Cardiac septum (tissue), 1 donor: ENCODE measurements at regions of chr19 and their contacts with region 1.

Region 1: DNA sequence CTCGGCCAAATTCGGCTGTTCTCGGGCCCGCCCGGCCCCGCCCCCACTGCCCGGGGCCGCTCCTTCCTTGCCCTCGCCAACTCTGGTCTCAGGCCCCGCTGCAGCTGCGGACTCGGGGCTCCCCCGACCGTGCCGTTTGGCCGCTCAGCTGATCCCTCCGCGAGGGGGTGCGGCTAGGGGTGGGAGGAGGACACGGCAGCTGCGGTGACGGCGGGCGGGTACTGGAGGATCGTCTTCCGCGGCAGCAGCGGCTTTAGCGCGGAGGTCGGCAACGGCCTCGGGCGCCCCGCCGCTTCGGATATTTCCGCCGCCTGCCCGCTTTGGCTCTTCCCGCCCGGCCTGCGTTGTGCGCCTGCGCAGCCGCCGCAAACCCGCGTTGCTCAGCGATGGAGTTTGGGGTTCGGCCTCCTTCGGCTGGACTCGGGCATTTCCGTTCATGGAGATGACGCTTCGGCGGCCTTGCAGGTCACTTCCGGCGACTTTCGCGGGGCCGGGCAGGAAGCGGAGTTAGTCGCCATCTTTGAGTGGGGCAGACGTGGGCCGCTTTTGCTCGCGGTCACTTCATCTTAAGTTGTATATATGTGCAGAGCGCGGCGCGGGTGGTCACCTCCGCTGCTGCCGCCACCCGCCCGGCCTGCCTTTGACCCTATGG is 338 bp upstream of the UBE2M start:
- DNase-seq: peak; percentile 100

Region 2: GRCh38 chr19:58519355-58520256 is 39.1 kb before region 1 on chr19 and contains the start of gene ZBTB45:
- intact Hi-C with region 1: loop called (anchors 2 kb)
- DNase-seq: peak; percentile 94
- total RNA-seq, gene ZBTB45: 13.8 TPM

Region 3: DNA sequence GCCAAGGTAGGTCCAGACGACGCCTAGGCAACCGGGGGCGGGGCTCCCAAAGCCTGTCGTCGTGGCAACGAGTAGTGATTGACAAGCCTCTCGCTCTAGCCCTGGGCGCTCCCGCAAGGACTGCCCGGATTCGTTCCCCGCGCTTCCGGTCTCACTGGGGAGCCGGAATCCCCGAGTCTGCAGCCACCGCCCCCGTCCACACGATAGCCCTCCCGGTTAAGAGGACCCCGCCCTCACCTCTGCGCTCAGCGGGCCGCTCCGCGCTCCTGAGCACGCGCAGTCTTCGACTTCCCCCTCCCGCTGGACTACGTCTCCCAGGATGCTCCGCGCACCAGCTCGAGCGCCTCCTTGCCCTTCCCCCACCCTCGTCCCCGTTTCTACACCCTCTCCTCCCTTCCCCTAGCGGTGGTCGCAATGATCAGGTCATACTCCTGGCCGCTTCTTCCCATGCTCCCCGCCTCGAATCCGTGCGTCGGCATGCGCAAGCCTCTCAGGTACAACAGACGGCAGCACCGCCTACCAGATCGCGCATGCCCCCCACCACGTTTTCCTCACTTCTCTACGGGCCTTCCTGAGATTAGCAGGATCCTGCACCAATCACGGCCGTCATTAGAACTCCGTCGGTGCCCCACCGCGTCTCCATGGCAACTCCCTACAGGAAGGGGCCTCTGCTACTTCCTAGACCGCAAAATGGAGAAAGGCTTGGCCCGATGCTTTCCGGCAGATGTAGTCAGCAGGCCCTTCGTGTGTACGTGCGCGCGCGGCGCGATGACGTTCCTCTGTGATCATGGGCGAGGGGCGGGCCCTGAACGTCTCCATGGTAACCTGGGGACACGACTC is 14.3 kb after region 1 on chr19 and contains the start of gene MZF1:
- intact Hi-C with region 1: loop called (anchors 1 kb)
- DNase-seq: peak; percentile 100
- total RNA-seq, gene MZF1: 12.4 TPM